ENCODE measurements at regions of chr6 and their contacts with region 1.

Region 1: GRCh38 chr6:137933696-137934095 is 66.6 kb downstream of the TNFAIP3 start:
- DNase-seq: peak in 1 of 2 donors; percentile 56
- H3K4me3 ChIP-seq: no peak overlapping the region
- H3K27ac ChIP-seq: peak overlapping the region; percentile 60 to 79
- H3K4me1 ChIP-seq: no peaks in the 10 kb centered on the region
- H3K27me3 ChIP-seq: no peaks in the 10 kb centered on the region
- CTCF ChIP-seq: no peak
- POLR2A ChIP-seq: no peak

Region 2: GRCh38 chr6:137951064-137951597 is 17.4 kb after region 1 on chr6:
- intact Hi-C with region 1: loop called (anchors 1 kb)
- DNase-seq: no peak
- H3K4me3 ChIP-seq: no peak overlapping the region
- H3K27ac ChIP-seq: no peak overlapping the region
- H3K4me1 ChIP-seq: no peaks in the 10 kb centered on the region
- H3K27me3 ChIP-seq: no peaks in the 10 kb centered on the region
- CTCF ChIP-seq: no peak
- POLR2A ChIP-seq: no peak